ENCODE measurements at regions of chr4 and their contacts with region 1.

Region 1: DNA sequence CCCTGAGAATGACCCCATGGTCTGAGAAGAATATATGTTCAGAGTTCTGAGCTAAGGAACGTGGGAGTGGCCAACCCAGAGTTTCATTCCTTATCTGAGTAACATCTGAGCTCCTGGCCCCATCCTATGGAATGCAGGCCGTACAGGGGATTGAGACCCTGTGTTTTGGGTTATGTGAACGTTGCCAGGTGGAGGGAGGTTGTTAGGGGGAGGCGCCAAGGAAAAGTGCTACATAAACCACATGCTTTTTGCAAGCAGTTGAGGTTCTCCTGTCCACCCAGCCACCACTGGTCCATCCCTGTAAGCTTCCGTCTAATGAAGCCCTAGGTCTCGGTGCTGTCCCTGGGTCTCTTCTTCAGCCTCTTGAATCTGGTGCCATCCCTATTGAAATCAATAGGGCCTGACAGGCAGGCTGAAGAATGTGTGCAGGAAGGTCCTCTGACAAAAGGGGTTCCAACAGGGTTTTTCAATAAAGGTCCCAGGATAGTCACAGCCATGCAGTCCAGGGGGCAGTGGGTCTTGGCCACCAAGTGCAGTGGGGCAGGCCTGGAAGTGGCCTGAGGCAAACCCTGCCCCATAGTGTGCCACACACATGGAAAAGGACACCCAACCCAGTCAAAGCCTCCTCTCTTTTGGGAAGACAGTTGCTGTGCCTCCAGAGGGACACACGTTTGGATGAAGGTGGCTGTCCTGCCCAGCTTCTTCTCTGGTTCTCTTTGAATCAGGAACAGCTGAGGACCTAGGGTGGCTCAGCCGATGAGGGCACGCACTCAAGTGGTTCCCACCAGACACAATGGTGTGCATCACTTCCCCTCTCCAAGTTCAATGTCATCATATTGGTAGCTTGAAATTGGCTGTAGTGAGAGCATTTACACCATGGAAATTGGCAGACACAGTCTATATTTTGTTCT is 53.5 kb downstream of the HTRA3 start:
- DNase-seq: peak in 1 of 2 donors; percentile 36
- ATAC-seq: no peak
- H3K4me3 ChIP-seq: no peak overlapping the region
- H3K27ac ChIP-seq: no peak overlapping the region
- H3K4me1 ChIP-seq: peaks cover 16% of the 10 kb centered on the region
- H3K27me3 ChIP-seq: no peaks in the 10 kb centered on the region
- CTCF ChIP-seq: no peak

Region 2: DNA sequence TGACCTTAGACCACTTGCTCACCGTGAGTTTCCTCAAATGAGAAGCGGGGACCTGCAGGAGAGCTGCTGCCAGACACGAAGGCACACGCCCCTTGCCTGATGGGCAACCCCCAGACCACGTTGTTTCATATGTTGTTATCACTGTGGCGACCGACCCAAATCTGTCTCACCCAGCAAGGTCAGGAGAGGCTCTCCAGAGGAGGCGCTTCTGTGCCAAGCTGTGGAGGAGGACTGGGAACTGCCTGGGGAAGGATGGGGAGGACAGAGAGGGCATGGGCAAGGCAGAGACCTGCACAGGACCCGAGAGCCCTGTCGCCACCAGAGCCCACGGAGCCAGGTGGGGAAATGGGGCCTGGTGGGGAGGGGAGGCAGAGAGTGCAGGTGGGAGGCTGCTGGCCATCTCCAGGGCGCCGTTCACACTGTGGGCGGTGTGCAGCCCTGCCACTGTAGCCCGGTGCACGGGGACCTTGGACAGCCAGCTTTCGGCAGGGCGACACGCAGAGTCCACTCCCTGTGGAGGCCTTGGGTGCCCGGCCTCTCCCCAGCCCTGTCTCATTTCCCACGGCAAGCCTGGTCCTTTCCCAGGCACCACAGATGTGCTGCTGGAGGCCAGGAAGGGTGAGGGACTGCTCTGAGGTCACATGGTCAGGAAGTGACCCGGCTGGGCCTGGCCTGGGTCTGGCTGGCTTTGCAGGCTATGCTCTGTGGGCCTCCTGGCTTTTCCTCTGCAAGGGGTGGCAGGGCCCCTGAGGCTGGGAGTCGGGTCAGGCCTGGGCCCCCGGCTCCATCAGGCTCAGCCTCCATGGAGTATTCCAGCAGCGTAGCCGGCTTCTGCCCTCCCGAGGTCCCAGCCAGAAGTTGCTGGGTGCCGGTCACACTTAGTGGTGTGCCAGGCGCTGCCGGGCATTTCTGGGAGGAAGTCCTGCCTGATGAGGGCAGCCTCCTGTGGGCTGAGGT is 50.3 kb before region 1 on chr4:
- intact Hi-C with region 1: loop called in 1 of 2 experiments (anchors 1 kb)
- DNase-seq: peak in 1 of 2 donors; percentile 77
- ATAC-seq: no peak
- H3K4me3 ChIP-seq: peak overlapping the region; percentile 24
- H3K27ac ChIP-seq: no peak overlapping the region
- H3K4me1 ChIP-seq: peaks cover 51% of the 10 kb centered on the region
- H3K27me3 ChIP-seq: no peaks in the 10 kb centered on the region
- CTCF ChIP-seq: no peak

Region 3: DNA sequence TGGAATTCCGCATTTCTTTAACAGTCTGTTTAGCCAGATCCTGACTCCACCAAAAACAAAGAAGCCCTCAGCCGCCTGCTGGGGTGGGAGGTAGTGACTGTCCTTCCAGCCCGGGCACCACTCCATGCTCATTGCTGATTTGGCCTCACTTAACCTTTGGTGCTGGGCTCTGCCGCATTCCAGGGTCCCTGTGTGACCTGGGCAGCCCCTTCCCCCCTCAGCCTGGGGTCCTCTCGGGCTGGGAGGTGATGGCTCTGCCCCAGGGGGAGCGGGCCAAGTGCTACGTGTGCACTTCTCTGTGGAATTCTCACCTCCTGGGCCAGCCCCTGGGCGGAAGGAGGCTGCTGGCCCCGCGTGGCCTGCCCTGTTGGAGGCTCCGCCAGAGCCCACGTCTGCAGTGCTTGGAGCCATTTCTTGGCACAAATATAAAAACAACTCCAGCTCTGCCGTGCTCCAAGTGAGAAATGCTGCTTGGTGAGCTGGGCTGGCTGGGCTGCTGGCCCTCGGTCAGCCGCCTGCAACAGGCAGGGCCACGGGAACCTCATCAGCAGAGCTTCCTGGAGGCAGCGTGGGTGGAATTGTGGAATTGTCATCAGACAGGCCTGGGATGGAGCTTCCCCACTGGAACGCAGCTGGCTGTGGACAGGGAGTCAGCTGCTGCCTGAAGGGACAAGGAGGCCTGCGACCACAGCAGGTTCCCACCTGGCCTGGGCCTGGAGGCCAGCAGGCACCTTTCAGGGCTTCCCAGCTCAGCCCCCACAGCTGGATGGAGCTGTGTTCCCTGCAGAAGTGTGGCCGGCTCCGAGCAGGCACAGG is 183.5 kb after region 1 on chr4:
- intact Hi-C with region 1: no loop called
- DNase-seq: peak in 1 of 2 donors; percentile 49
- ATAC-seq: peak; percentile 34 to 59 (median 40)
- H3K4me3 ChIP-seq: no peak overlapping the region
- H3K27ac ChIP-seq: peak overlapping the region; percentile 39
- H3K4me1 ChIP-seq: peaks cover 14% of the 10 kb centered on the region
- H3K27me3 ChIP-seq: no peaks in the 10 kb centered on the region
- CTCF ChIP-seq: no peak

Region 4: DNA sequence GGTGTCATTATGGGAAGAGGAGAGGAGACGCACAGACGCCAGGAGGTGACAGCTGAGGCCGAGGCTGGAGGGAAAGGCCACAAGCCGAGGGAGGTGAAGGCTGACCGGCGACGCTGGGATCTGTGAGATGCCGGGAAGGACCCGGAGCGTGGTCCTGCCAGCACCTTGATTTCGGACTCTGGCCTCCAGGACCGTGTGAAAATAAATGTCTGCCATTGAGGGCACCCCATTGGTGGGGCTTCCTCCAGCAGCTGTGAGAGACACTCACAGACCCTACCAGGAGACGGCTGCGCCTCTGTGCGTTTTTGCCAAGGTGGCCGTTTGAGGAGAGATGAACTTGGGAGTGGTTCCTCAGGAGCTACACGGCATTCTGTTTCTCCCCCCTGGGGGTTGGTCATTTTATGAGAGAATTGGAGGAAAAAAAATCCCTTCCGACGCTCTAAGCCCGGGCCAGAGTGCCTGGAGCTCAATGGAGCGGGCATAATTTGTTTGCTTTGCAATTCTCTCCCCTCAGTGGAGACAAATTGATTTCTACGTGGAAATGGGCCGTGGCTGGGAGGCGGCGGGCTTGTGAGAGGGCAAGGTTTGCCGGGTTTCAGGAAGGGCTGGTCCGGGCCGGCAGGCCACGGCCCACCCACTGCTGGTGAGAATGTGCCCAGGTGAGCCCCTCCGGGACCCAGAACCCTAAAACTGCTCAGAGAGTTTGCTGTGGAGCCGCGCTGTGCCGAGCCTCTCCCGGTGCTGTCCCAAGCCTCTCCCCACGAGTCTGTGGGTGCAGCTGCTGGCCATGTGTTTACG is 323.4 kb after region 1 on chr4:
- intact Hi-C with region 1: no loop called
- DNase-seq: no peak
- ATAC-seq: no peak
- H3K4me3 ChIP-seq: no peak overlapping the region
- H3K27ac ChIP-seq: no peak overlapping the region
- H3K4me1 ChIP-seq: no peaks in the 10 kb centered on the region
- H3K27me3 ChIP-seq: peaks cover 2 to 26% (median 8%) of the 10 kb centered on the region in 3 donors
- CTCF ChIP-seq: no peak

Measured in psoas muscle (tissue), 8 donors.